PC-9 (cell line): ENCODE measurements at regions of chr6 and their contacts with region 1.

Region 1: GRCh38 chr6:45714741-45715507 is 300.7 kb downstream of the CLIC5 start:
- DNase-seq: peak; percentile 52 to 75
- H3K4me3 ChIP-seq: no peak overlapping the region
- H3K27ac ChIP-seq: no peak overlapping the region
- H3K4me1 ChIP-seq: peaks cover 25% of the 10 kb centered on the region
- H3K27me3 ChIP-seq: no peaks in the 10 kb centered on the region
- CTCF ChIP-seq: peak; percentile 85

Region 2: DNA sequence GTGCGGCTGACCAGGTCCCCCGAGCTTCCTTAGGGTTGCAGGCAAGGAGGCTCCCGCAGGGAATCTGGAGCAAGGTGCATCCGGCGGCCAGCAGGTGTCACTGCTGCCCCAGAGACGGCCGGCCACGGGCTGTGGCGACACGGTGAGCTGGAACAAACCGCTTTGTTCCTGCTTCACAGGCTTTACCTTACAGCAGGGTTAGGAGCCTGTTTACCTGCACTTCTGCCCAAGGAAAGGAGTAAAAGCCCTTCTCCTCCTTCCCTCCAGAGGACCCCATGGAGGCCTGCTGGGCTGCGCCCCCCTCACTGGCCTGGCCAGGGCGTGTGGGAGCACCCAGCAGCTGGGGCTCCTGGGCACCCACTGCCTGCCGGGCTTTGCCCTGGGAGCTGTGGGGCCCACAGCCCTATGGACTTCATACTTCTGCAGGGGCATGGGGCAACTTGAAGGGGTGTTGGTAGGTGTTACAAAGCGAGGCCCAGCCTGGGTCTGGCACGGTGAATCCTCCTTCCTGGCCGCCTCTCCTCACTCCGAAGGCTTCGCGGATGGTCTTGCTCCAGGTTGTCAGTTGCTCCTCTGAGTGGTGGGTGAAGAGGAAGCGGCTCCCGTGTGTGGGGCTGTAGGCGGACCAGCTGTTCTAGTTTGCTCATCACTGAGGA is 1239.0 kb before region 1 on chr6:
- CTCF ChIA-PET with region 1: interaction called, 14 read pairs
- POLR2A ChIA-PET with region 1: no interaction called
- intact Hi-C with region 1: loop called (anchors 5 kb)
- DNase-seq: peak; percentile 54 to 86
- H3K4me3 ChIP-seq: no peak overlapping the region
- H3K27ac ChIP-seq: no peak overlapping the region
- H3K4me1 ChIP-seq: peaks cover 18% of the 10 kb centered on the region
- H3K27me3 ChIP-seq: no peaks in the 10 kb centered on the region
- CTCF ChIP-seq: peak; percentile 92

Region 3: GRCh38 chr6:45445749-45446549 is 269.0 kb before region 1 on chr6:
- CTCF ChIA-PET with region 1: no interaction called
- POLR2A ChIA-PET with region 1: no interaction called
- intact Hi-C with region 1: loop called (anchors 2 kb)
- DNase-seq: peak; percentile 79 to 94
- H3K4me3 ChIP-seq: no peak overlapping the region
- H3K27ac ChIP-seq: peak overlapping the region; percentile 84
- H3K4me1 ChIP-seq: peaks cover 40% of the 10 kb centered on the region
- H3K27me3 ChIP-seq: no peaks in the 10 kb centered on the region
- CTCF ChIP-seq: no peak

Region 4: DNA sequence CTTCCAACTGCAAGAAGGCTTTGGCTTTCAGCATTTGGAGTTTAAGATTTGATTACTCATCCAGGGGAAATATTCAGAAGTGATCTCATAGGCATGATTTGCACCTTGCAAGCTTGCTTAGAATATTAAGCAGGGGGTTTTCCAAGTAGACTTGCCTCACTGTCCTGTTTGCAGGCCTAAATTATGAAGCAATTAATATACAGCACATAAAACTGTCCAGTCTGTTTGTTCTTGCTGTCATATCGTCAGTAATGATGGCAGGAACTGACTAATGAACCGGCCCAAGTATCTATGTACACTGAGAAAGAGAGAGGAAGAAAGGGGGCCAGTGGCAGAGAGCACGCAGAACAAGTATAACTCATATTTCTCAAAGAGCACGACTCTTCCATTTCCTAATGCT is 124.7 kb before region 1 on chr6:
- CTCF ChIA-PET with region 1: no interaction called
- POLR2A ChIA-PET with region 1: no interaction called
- intact Hi-C with region 1: loop called (anchors 5 kb)
- DNase-seq: peak in 1 of 2 experiments; percentile 87
- H3K4me3 ChIP-seq: no peak overlapping the region
- H3K27ac ChIP-seq: peak overlapping the region; percentile 88
- H3K4me1 ChIP-seq: peaks cover 62% of the 10 kb centered on the region
- H3K27me3 ChIP-seq: no peaks in the 10 kb centered on the region
- CTCF ChIP-seq: no peak

Region 5: GRCh38 chr6:45655630-45656422 is 59.1 kb before region 1 on chr6:
- CTCF ChIA-PET with region 1: no interaction called
- POLR2A ChIA-PET with region 1: no interaction called
- intact Hi-C with region 1: loop called (anchors 1 kb)
- DNase-seq: peak; percentile 72 to 98
- H3K4me3 ChIP-seq: peak overlapping the region; percentile 22; the same call in 1 of the 2 replicates
- H3K27ac ChIP-seq: peak overlapping the region; percentile 92
- H3K4me1 ChIP-seq: peaks cover 61% of the 10 kb centered on the region
- H3K27me3 ChIP-seq: no peaks in the 10 kb centered on the region
- CTCF ChIP-seq: no peak

Region 6: DNA sequence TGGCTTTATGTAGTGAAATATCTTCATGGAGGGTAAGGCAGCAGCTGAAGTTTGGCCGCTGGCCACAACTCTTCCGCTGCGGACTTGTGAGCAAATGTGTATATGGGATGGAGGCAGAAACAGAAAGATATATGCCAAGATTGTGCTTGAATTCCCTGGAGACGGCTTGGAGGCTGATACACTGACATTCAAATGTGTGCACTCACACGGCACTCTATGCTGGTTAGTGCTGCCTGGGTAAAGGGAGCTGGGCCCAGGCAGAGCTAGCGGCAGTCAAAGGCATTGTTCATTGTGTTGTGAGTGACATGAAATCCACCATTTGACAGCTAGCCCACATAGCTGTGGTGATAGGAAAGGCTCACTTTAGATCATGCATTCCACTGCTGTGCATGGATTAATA is 98.0 kb after region 1 on chr6:
- CTCF ChIA-PET with region 1: no interaction called
- POLR2A ChIA-PET with region 1: no interaction called
- intact Hi-C with region 1: no loop called
- DNase-seq: no peak
- H3K4me3 ChIP-seq: no peak overlapping the region
- H3K27ac ChIP-seq: no peak overlapping the region
- H3K4me1 ChIP-seq: no peaks in the 10 kb centered on the region
- H3K27me3 ChIP-seq: no peaks in the 10 kb centered on the region
- CTCF ChIP-seq: no peak